ENCODE measurements at regions of chr15 and their contacts with region 1.

Region 1: GRCh38 chr15:67065444-67066093 is at the start of gene SMAD3:
- DNase-seq: peak; percentile 80

Region 2: GRCh38 chr15:67048281-67049279 is 17.0 kb before region 1 on chr15:
- CTCF ChIA-PET with region 1: no interaction called
- POLR2A ChIA-PET with region 1: interaction called, 13 read pairs
- DNase-seq: no peak